ENCODE measurements at regions of chr3 and their contacts with region 1.

Region 1: DNA sequence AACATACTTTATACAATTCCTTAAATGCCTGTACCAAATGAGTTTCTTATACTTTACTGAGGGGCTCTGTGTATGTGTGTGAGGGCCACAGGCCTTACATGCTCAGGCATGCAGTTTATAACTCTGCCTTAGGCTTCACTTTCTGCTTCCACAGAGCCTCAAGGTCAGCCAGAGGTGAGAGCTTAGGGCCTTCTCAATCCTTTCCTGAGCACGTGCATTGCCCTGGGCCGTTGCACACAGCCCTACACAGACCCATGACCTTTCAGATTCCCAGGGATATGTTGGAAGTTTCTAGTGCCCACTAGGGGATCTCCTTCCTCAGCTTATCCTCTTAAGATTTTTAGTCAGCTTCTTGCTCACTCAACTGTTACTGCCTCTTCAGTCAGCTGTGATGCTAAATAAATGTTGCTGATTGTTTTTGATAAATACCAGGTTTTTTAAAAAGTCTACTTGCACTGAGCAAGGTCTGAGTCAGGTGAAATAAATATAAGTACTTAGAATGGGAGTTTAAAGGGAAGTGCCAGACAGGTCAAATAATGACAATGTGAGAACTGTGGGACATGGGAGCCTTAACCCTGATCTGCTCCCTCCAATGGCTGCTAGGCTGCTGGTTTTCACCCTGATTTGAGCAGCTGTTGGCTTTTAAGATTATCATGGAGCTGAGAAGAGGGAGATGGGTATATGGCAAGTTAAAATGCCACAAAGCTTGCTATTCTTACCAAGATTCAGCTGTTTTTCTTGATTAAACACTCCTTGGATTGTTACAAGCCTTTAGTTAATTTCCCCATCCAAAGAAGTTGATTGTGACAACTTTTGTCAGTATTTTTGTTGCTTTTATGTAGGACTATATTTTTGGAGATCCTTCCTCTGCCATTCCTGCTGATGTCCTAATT is 169.5 kb downstream of the PLD1 start:
- DNase-seq: no peak
- H3K4me3 ChIP-seq: no peak overlapping the region
- H3K27ac ChIP-seq: no peak overlapping the region
- H3K4me1 ChIP-seq: no peaks in the 10 kb centered on the region
- H3K27me3 ChIP-seq: no peaks in the 10 kb centered on the region
- CTCF ChIP-seq: no peak

Region 2: DNA sequence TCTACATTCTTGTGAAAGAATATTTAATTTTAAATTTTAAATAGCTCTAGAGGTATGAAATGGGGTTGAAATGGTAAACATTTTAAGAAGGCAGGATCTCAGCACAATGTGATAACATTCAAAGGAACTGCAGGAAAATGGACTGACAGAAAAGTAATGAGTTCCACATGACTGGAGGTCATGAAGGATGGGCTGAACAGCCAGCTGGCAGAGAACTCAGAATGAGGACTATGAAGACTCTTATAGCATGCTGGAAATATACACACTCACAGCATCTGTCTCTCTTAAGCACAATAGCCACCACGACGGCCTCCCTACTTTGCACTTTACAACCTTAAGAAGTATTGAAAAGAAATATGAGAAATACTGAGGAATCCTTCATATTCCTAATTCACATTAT is 275.3 kb before region 1 on chr3:
- intact Hi-C with region 1: no loop called
- DNase-seq: no peak
- H3K4me3 ChIP-seq: no peak overlapping the region
- H3K27ac ChIP-seq: no peak overlapping the region
- H3K4me1 ChIP-seq: no peaks in the 10 kb centered on the region
- H3K27me3 ChIP-seq: no peaks in the 10 kb centered on the region
- CTCF ChIP-seq: no peak

Region 3: DNA sequence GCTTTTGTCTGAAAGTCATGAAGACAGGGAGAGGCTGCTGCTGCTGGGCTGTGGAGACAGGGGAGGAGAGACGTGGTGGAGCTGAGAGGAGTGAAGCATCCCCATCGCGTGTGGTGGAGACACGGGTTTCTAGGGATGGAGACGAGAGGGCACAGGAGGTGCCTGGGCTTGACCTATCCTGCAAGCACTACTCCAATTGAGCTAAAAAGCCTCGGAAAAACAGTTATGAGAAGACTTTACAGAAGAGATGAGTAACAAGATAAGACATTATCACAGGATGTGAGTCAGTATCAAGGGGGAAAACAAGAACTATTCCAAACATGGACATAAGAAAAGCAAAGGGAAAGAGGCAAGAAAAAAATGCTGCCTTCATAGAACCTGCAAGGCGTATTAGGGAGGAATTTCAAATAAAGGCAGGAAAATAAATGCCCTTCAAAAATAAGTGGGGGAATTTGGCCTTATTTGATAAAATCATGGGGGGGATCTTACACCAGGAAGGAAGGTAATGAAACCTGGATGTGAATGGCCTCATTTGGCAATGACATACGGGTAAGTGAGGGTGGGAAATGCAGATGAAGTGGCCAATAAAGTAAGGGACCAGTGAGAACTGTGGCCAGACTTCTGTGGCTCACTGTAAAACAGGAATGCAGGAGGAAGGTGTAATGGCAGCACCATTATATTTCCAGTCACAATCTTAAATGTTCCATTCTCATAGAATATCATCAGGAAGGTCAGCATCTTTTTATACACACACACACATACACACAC is 71.6 kb after region 1 on chr3:
- intact Hi-C with region 1: no loop called
- DNase-seq: no peak
- H3K4me3 ChIP-seq: no peak overlapping the region
- H3K27ac ChIP-seq: peak overlapping the region; percentile 66 to 72
- H3K4me1 ChIP-seq: peaks cover 0 to 17% (median 7%) of the 10 kb centered on the region in 4 donors
- H3K27me3 ChIP-seq: no peaks in the 10 kb centered on the region
- CTCF ChIP-seq: no peak

Region 4: DNA sequence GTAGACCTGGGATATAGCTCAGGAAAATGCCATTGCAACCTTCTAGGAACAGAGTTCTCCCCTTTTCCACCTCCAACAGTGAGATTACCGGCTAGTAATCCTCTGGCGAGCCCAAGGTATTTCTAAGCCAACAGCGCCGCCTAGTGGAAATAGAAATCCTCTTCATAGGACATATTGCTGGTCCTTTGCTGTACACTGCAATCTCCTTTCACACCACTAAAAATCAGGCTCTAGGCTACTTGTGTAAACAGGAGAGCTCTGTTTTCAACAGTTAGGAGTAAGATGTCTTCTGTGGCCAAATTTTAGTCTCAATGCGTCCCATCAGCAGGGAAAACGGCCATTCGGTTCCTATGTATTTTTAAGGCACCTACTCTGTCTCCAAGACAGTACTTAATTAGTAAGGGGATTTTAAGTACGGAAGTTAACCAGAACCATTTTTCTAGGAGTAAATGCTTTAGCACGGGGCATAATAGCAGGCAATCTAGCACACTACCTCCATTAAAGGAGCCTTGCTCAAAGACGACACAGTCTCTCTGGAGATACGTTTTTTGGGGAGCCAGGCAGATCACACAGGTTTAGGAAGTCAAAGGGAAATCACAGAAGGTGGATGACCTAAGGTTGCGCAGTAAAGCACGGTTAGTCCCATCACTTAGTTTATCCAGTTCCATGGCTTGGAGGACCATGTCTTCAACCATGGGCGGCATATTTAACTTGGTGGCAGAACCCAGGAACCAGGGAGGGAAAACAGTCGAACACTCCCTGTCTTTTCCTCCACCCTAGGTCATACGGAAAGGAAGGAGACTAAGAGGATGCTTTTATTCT is 1026.3 kb after region 1 on chr3:
- intact Hi-C with region 1: loop called (anchors 5 kb)
- DNase-seq: peak in 1 of 2 donors; percentile 70
- H3K4me3 ChIP-seq: no peak overlapping the region
- H3K27ac ChIP-seq: no peak overlapping the region
- H3K4me1 ChIP-seq: peaks cover 0 to 3% (median 0%) of the 10 kb centered on the region in 4 donors
- H3K27me3 ChIP-seq: no peaks in the 10 kb centered on the region
- CTCF ChIP-seq: peak; percentile 72 to 82